Natural killer cell (primary cell): ENCODE measurements at regions of chr17 and their contacts with region 1.

Region 1: GRCh38 chr17:76264755-76265596 is at the start of gene UBALD2:
- DNase-seq: peak; percentile 98 to 99
- ATAC-seq: peak; percentile 72 to 92 (median 82)
- H3K4me3 ChIP-seq: peak within 1 kb of the TSS; percentile 61
- H3K4me3 Mint-ChIP-seq: peak within 1 kb of the TSS; percentile 94
- H3K27ac ChIP-seq: peak within 1 kb of the TSS; percentile 77
- H3K27ac Mint-ChIP-seq: peak within 1 kb of the TSS; percentile 99
- H3K4me1 ChIP-seq: peaks cover 74% of the 10 kb centered on the region
- H3K4me1 Mint-ChIP-seq: peaks cover 60% of the 10 kb centered on the region in 2 donors
- H3K27me3 ChIP-seq: no peaks in the 10 kb centered on the region
- H3K27me3 Mint-ChIP-seq: no peaks in the 10 kb centered on the region
- CTCF ChIP-seq: no peak
- total RNA-seq, gene UBALD2: 171 to 287 (median 189) TPM

Region 2: DNA sequence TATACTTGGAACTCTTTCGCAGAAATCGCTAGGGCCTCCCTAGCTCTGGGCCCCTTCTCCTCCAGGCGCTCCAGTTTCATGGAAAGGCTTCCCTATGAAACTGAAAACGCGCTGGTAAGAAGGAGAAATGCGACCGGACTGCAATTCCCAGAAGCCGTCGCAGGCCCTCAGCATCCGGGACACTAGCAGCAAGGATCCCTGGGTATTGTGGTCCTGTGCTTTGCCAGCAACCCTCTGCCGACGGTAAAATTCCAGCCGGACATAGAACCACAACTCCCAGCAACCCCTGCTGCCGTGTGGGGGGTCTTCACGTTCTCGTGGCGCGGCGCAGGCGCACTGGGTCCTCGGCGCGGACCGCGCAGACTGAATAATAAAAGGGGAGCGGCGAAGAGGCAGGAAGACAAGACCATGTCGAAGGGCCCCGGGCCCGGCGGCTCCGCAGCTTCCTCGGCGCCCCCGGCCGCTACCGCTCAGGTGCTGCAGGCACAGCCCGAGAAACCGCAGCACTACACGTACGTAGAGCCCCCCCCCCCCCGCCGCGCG is 480.4 kb before region 1 on chr17 and contains the start of gene UNK:
- intact Hi-C with region 1: loop called (anchors 10 kb)
- DNase-seq: peak; percentile 93 to 98
- ATAC-seq: peak; percentile 71 to 87 (median 74)
- H3K4me3 ChIP-seq: peak within 1 kb of the TSS; percentile 47
- H3K4me3 Mint-ChIP-seq: peak within 1 kb of the TSS; percentile 93
- H3K27ac ChIP-seq: peak within 1 kb of the TSS; percentile 96
- H3K27ac Mint-ChIP-seq: peak within 1 kb of the TSS; percentile 97 to 99
- H3K4me1 ChIP-seq: peaks cover 35% of the 10 kb centered on the region
- H3K4me1 Mint-ChIP-seq: peaks cover 43 to 46% of the 10 kb centered on the region in 2 donors
- H3K27me3 ChIP-seq: no peaks in the 10 kb centered on the region
- H3K27me3 Mint-ChIP-seq: peaks cover 0 to 3% of the 10 kb centered on the region in 2 donors
- CTCF ChIP-seq: no peak
- total RNA-seq, gene UNK: 44.2 to 51.3 (median 44.5) TPM

Region 3: GRCh38 chr17:76141212-76142038 is 123.6 kb before region 1 on chr17 and contains the start of gene FOXJ1:
- intact Hi-C with region 1: loop called (anchors 5 kb)
- DNase-seq: peak; percentile 94 to 96
- ATAC-seq: peak; percentile 74 to 82 (median 80)
- H3K4me3 ChIP-seq: peak within 1 kb of the TSS; percentile 48
- H3K4me3 Mint-ChIP-seq: peak within 1 kb of the TSS; percentile 82
- H3K27ac ChIP-seq: no peak within 1 kb of the TSS
- H3K27ac Mint-ChIP-seq: peak within 1 kb of the TSS; percentile 94 to 95
- H3K4me1 ChIP-seq: peaks cover 64% of the 10 kb centered on the region
- H3K4me1 Mint-ChIP-seq: peaks cover 47 to 61% of the 10 kb centered on the region in 2 donors
- H3K27me3 ChIP-seq: peaks cover 18% of the 10 kb centered on the region
- H3K27me3 Mint-ChIP-seq: peaks cover 0 to 7% of the 10 kb centered on the region in 2 donors
- CTCF ChIP-seq: no peak
- total RNA-seq, gene FOXJ1: 0.21 to 0.93 (median 0.36) TPM

Region 4: GRCh38 chr17:76191896-76192295 is 73.1 kb before region 1 on chr17:
- intact Hi-C with region 1: loop called (anchors 5 kb)
- DNase-seq: peak in 1 of 2 donors; percentile 87
- ATAC-seq: peak; percentile 73 to 82 (median 81)
- H3K4me3 ChIP-seq: no peak overlapping the region
- H3K4me3 Mint-ChIP-seq: peak overlapping the region; percentile 87
- H3K27ac ChIP-seq: peak overlapping the region; percentile 57
- H3K27ac Mint-ChIP-seq: peak overlapping the region; percentile 85 to 87
- H3K4me1 ChIP-seq: peaks cover 32% of the 10 kb centered on the region
- H3K4me1 Mint-ChIP-seq: peaks cover 45 to 46% of the 10 kb centered on the region in 2 donors
- H3K27me3 ChIP-seq: no peaks in the 10 kb centered on the region
- H3K27me3 Mint-ChIP-seq: no peaks in the 10 kb centered on the region
- CTCF ChIP-seq: no peak

Region 5: GRCh38 chr17:76292567-76292966 is 27.6 kb after region 1 on chr17:
- intact Hi-C with region 1: no loop called
- DNase-seq: no peak
- ATAC-seq: no peak
- H3K4me3 ChIP-seq: no peak overlapping the region
- H3K4me3 Mint-ChIP-seq: no peak overlapping the region
- H3K27ac ChIP-seq: no peak overlapping the region
- H3K27ac Mint-ChIP-seq: no peak overlapping the region
- H3K4me1 ChIP-seq: no peaks in the 10 kb centered on the region
- H3K4me1 Mint-ChIP-seq: no peaks in the 10 kb centered on the region
- H3K27me3 ChIP-seq: no peaks in the 10 kb centered on the region
- H3K27me3 Mint-ChIP-seq: no peaks in the 10 kb centered on the region
- CTCF ChIP-seq: no peak

Region 6: DNA sequence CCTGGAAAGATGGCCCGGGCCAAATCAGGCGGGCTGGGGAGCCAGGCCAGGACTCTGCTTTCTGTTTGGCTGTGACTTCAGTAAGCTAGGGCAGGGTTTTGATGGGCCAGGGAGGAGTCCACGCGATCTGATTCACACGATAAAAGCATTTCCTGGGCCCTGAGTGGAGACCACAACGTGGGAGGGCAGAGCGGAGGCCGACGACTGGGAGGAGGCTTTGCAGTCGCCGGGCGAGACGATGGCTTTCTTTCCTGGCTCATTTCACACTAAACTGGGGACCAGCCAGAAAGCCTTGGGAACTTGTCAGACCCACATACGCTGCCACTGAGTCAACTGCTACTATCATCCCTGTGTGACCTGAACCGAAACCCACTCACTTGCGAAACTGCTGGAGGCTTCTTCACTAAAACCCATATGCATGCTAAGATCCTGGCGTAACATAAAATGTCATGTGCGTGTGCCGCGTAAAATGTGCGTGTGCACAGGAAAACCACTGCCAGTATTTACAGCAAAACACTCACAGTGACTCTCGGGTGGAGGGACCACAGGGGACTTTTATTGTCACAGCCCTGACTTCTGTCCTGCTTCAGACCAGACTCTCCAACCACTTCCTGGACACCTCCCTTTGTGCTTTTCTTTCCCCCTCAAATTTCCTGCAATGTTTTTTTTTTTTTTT is 250.4 kb after region 1 on chr17:
- intact Hi-C with region 1: loop called (anchors 10 kb)
- DNase-seq: peak; percentile 80 to 97
- ATAC-seq: peak; percentile 79 to 89 (median 81)
- H3K4me3 ChIP-seq: peak overlapping the region; percentile 31
- H3K4me3 Mint-ChIP-seq: peak overlapping the region; percentile 77
- H3K27ac ChIP-seq: peak overlapping the region; percentile 86
- H3K27ac Mint-ChIP-seq: peak overlapping the region; percentile 92 to 96
- H3K4me1 ChIP-seq: peaks cover 82% of the 10 kb centered on the region
- H3K4me1 Mint-ChIP-seq: peaks cover 43 to 60% of the 10 kb centered on the region in 2 donors
- H3K27me3 ChIP-seq: no peaks in the 10 kb centered on the region
- H3K27me3 Mint-ChIP-seq: no peaks in the 10 kb centered on the region
- CTCF ChIP-seq: no peak

Region 7: GRCh38 chr17:76737082-76737675 is 472.2 kb after region 1 on chr17 and contains the start of gene SRSF2:
- intact Hi-C with region 1: loop called (anchors 10 kb)
- DNase-seq: peak; percentile 98 to 100
- ATAC-seq: peak; percentile 73 to 89 (median 75)
- H3K4me3 ChIP-seq: peak within 1 kb of the TSS; percentile 81
- H3K4me3 Mint-ChIP-seq: peak within 1 kb of the TSS; percentile 96
- H3K27ac ChIP-seq: peak within 1 kb of the TSS; percentile 98
- H3K27ac Mint-ChIP-seq: peak within 1 kb of the TSS; percentile 99 to 100
- H3K4me1 ChIP-seq: peaks cover 26% of the 10 kb centered on the region
- H3K4me1 Mint-ChIP-seq: peaks cover 53 to 59% of the 10 kb centered on the region in 2 donors
- H3K27me3 ChIP-seq: no peaks in the 10 kb centered on the region
- H3K27me3 Mint-ChIP-seq: no peaks in the 10 kb centered on the region
- CTCF ChIP-seq: no peak
- total RNA-seq, gene SRSF2: 402 to 548 (median 503) TPM